ENCODE measurements at regions of chr22 and their contacts with region 1.

Region 1: DNA sequence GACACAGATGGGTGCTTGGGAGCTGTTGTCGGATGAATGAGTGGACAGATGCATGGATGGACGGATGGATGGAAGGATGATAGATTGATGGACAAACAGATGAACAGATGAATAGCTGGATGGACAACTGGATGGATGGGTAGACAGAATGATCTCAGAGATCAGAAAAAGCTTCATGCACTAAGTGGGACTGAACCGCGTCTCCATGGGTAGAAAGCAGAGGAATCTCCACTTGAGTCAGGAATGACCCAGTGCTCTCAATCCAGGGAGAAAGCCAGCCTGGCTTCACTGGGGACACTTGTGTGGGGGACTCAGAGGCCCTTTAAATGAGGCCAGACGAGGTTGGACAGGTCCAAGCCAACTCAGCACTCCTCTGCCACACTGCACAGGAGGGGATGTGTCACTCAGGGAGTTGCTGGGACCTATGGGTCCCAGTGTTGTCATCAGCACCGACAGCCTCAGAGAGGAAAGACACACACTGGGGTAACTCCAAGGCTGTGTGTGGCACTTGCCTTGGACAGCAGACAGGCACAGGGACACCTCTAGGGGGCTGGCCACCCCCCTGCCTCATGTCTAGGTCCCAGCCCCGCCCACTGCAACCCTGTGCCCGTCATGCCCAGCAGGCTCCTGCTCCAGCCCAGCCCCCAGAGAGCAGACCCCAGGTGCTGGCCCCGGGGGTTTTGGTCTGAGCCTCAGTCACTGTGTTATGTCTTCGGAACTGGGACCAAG is 5.6 kb downstream of the IGLL5 start:
- DNase-seq: peak in 3 of 4 experiments; percentile 63 to 70 (median 66)
- ATAC-seq: peak; percentile 22
- H3K4me3 ChIP-seq: no peak overlapping the region
- H3K27ac ChIP-seq: no peak overlapping the region
- H3K4me1 ChIP-seq: no peaks in the 10 kb centered on the region
- H3K27me3 ChIP-seq: peaks cover 15 to 53% of the 10 kb centered on the region in 2 experiments; a peak in 4 of 5 replicates
- CTCF ChIP-seq: 0 out of 6 replicates have a peak, but pooled peaks of 1 of the 3 experiments have one; percentile 3
- EP300 ChIP-seq: no peak
- POLR2A ChIP-seq: no peak
- RAD21 ChIP-seq: no peak

Region 2: GRCh38 chr22:22903355-22903777 is 10.1 kb after region 1 on chr22:
- CTCF ChIA-PET with region 1: no interaction called
- POLR2A ChIA-PET with region 1: interaction called, 10 read pairs
- in situ Hi-C with region 1: no loop called
- intact Hi-C with region 1: loop called (anchors 1 kb)
- DNase-seq: peak in 3 of 4 experiments; percentile 53 to 59 (median 53)
- ATAC-seq: no peak
- H3K4me3 ChIP-seq: no peak overlapping the region
- H3K27ac ChIP-seq: no peak overlapping the region
- H3K4me1 ChIP-seq: no peaks in the 10 kb centered on the region
- H3K27me3 ChIP-seq: peaks cover 37 to 44% of the 10 kb centered on the region in 2 experiments; a peak in 4 of 5 replicates
- CTCF ChIP-seq: no peak
- EP300 ChIP-seq: no peak
- POLR2A ChIP-seq: no peak
- RAD21 ChIP-seq: no peak